PC-9 (cell line): ENCODE measurements at regions of chr15 and their contacts with region 1.

Region 1: DNA sequence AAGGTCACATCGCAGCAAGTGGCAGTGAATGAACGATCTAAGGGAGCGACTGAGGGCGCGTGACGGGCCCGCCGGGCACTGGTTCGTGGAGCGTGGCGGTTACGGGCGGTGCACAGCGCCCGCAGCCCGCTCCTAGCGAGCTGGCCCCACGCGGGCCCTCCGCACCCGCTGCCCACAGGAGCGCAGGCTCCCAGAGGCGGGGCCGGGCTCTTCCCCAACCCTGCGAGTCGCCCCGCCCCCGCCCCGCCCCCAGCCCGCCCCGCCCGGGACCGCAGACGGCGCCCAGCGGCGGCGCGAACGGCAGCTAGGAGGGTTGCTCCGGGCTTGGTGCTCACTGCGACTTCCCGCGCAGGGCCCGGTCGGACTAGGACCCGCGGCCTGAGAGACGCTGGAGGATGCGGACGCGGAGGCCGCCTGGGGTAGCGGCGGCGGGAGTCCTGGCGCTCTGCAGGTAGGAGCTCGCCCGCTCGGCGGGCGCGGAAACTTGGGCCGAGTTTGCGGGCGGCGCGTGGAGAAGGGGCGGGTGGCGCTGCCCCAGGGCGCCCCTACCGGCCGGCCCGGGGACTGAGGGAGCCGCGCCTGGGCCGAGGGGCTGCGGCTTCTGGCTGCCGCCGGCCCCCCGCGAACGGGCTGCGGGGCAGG is at the start of gene C15orf39:
- DNase-seq: peak; percentile 52 to 74
- H3K4me3 ChIP-seq: peak within 1 kb of the TSS; percentile 93
- H3K27ac ChIP-seq: peak within 1 kb of the TSS; percentile 97
- H3K4me1 ChIP-seq: peaks cover 43% of the 10 kb centered on the region
- H3K27me3 ChIP-seq: no peaks in the 10 kb centered on the region
- CTCF ChIP-seq: peak; percentile 73; the same call in 1 of the 2 replicates
- total RNA-seq, gene C15orf39: 40.8 and 41.3 TPM in 2 replicates

Region 2: DNA sequence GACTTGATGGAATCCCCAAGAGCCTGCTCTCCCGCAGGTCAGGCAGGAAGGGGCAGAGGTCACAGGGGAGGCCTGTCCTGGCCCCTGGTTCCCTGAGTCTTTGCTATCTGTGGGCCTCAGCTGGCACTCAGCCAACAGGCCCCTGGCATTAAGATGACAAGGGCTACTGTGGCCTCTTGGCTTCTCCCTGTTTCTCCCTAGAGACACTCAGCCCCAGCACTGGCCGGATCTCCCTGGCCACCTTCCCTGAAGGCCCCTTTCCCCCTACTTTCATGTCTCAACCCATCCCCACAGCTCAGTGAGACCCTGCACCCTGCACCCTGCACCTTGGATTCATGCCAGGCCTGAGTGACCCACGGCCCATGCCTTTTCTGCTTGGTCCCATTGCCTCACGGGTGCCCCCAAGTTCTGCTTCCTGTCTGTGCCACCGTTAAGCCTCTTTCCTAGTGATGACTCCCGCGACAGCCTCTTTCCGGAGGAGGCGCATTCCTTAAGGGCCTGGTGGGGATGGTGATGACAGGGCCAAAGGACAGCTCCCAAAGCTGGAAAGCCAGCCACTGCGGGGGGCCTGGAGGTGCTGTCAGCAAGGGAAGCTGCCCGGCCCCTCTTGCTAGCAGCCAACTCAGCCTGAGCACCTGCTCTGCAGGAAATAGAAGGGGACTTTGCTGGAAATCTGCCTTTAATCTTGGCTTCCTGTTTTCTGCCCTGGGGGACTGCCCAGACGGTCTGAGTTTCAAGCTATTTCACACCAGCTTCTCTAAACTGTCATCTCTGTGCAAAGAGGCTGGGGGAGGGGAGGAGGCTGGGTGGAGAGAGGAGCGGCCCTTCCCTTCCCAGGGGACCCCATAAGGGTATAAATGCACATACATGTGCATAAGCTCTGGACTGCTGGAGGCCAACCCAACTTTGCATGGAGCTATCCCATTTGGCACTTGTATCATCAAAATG is 424.6 kb before region 1 on chr15:
- CTCF ChIA-PET with region 1: no interaction called
- POLR2A ChIA-PET with region 1: no interaction called
- intact Hi-C with region 1: no loop called
- DNase-seq: no peak
- H3K4me3 ChIP-seq: no peak overlapping the region
- H3K27ac ChIP-seq: no peak overlapping the region
- H3K4me1 ChIP-seq: peaks cover 17% of the 10 kb centered on the region
- H3K27me3 ChIP-seq: no peaks in the 10 kb centered on the region
- CTCF ChIP-seq: no peak

Region 3: GRCh38 chr15:74799856-74800547 is 401.7 kb before region 1 on chr15:
- CTCF ChIA-PET with region 1: no interaction called
- POLR2A ChIA-PET with region 1: no interaction called
- intact Hi-C with region 1: no loop called
- DNase-seq: peak; percentile 63 to 89
- H3K4me3 ChIP-seq: no peak overlapping the region
- H3K27ac ChIP-seq: no peak overlapping the region
- H3K4me1 ChIP-seq: 0 out of 2 replicates have a peak, but pooled peaks cover 8% of the 10 kb centered on the region
- H3K27me3 ChIP-seq: no peaks in the 10 kb centered on the region
- CTCF ChIP-seq: peak; percentile 96

Region 4: GRCh38 chr15:74937596-74938296 is 264.0 kb before region 1 on chr15 and contains the start of gene COX5A:
- CTCF ChIA-PET with region 1: no interaction called
- POLR2A ChIA-PET with region 1: no interaction called
- intact Hi-C with region 1: loop called (anchors 5 kb)
- DNase-seq: peak; percentile 90 to 95
- H3K4me3 ChIP-seq: peak within 1 kb of the TSS; percentile 90
- H3K27ac ChIP-seq: peak within 1 kb of the TSS; percentile 88
- H3K4me1 ChIP-seq: peaks cover 14% of the 10 kb centered on the region
- H3K27me3 ChIP-seq: no peaks in the 10 kb centered on the region
- CTCF ChIP-seq: no peak
- total RNA-seq, gene COX5A: 177 and 247 TPM in 2 replicates

Region 5: DNA sequence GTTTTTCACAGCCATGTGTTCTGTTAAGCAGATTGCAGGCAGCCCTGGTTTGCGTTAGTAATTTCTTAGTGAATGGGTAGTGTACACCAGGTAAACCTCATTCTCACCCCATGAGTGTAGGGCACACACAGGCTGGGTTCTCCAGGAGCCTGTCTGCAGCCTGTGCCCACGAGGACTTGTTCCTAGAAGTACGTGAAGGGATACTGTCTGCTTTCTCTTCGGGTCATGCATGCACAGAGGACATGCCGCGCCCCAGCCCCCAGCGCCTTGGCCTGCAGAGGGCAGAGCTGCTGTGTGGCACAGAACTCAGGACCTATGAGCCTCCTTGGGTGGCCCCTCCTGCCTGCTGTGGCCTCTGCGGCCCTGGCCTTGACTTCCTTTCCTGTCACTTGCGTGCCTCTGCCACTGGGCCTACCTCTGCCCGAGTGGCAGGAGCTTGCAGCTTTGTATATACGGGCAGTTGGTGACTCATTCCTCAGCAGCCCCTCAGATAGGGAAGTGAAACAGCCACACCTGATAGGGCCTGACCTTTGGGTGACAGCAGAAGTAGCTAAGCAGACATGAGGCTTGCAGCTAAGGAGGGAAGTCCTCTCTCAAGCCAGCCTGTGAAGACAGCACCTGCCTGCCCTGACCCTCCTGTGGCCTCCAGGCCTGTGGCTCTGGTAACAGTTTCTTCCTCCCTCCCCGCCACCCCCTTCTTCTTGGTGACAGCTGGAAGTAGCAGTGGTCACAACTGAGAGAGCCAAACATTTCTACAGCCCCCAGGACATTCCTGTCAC is 158.8 kb before region 1 on chr15:
- CTCF ChIA-PET with region 1: interaction called, 23 read pairs
- POLR2A ChIA-PET with region 1: interaction called, 20 read pairs
- intact Hi-C with region 1: loop called (anchors 1 kb)
- DNase-seq: peak; percentile 93 to 99
- H3K4me3 ChIP-seq: no peak overlapping the region; the same call in 1 of the 2 replicates
- H3K27ac ChIP-seq: peak overlapping the region; percentile 99
- H3K4me1 ChIP-seq: peaks cover 82% of the 10 kb centered on the region
- H3K27me3 ChIP-seq: no peaks in the 10 kb centered on the region
- CTCF ChIP-seq: peak; percentile 73

Region 6: DNA sequence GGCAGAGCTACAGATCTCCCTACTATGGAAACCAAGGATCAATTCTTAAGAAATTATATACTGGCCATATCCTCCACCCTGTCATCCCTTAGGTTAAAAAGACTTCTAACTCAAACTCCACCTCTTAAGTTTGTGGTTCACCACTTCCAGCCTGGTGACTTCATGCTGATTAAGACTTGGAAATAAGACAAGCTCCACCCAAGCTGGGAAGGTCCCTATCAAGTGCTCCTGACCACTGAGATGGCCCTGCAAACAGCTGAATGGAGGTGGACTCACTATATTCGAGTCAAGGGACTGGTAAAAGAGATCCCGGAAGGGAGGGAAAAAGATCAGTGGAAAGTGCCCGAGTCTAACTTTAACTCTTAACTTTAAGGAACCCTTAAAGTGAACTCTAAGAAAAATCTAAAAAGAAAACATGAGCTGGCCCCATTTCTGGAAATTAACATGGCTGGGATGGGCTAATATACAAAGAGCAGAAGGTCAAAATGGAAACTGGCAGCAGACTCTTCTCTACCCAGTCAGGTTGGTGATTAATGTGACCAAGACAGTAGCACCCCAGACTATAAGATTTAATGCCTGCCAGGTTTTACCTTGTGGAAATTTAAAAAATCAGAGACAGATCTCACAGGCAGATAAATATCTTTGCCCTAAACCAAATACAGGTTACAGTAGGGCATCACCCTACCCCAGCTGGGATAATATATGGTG is 134.5 kb before region 1 on chr15:
- CTCF ChIA-PET with region 1: interaction called, 4 read pairs
- POLR2A ChIA-PET with region 1: interaction called, 15 read pairs
- intact Hi-C with region 1: no loop called
- DNase-seq: peak; percentile 44 to 77
- H3K4me3 ChIP-seq: no peak overlapping the region
- H3K27ac ChIP-seq: peak overlapping the region; percentile 86
- H3K4me1 ChIP-seq: peaks cover 38% of the 10 kb centered on the region
- H3K27me3 ChIP-seq: no peaks in the 10 kb centered on the region
- CTCF ChIP-seq: no peak

Region 7: DNA sequence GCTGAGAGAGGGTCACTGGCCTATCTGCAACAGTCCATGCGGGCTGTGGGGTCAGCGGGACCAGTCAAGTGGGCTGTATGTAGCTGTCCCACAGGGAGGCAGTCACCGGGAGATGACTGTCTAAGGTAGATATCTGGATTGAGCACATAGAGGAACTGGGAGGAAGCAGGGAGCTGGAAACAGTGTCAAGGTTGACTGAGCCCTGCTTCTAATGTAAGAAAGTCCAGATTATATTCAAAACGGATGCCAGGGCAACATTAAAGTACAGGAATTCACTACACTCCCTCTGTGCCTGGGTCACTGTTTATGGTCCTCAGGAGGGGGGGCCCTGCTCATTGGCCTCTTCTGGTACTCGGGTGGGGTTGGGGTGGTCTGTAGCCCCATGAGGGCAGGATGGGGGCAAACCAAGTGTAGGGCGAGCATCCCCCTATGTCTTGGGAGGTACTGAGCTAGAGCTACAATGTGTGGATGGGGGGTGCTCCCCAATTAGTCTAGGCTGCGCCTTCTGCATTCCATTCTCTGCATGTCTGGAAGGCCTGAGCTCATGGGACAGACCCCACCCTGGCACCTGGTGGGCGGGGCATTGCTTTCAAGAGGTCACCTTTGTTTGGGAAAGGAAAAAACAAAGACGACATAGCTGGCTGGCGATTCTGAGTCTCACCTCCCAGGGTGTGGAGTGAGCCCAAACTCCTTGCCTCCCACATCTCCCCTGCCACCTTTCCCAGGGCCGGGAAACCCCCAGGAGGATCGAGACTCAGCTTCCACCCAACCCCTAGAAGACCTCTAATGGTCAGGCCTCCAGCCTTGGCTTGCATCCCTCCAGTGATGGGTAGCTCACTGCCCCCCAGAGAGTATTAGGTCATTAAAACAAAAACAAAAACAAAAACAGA is 45.2 kb before region 1 on chr15:
- CTCF ChIA-PET with region 1: interaction called, 3 read pairs
- POLR2A ChIA-PET with region 1: interaction called, 11 read pairs
- intact Hi-C with region 1: no loop called
- DNase-seq: peak; percentile 45 to 64
- H3K4me3 ChIP-seq: no peak overlapping the region
- H3K27ac ChIP-seq: no peak overlapping the region
- H3K4me1 ChIP-seq: 0 out of 2 replicates have a peak, but pooled peaks cover 8% of the 10 kb centered on the region
- H3K27me3 ChIP-seq: no peaks in the 10 kb centered on the region
- CTCF ChIP-seq: no peak

Region 8: DNA sequence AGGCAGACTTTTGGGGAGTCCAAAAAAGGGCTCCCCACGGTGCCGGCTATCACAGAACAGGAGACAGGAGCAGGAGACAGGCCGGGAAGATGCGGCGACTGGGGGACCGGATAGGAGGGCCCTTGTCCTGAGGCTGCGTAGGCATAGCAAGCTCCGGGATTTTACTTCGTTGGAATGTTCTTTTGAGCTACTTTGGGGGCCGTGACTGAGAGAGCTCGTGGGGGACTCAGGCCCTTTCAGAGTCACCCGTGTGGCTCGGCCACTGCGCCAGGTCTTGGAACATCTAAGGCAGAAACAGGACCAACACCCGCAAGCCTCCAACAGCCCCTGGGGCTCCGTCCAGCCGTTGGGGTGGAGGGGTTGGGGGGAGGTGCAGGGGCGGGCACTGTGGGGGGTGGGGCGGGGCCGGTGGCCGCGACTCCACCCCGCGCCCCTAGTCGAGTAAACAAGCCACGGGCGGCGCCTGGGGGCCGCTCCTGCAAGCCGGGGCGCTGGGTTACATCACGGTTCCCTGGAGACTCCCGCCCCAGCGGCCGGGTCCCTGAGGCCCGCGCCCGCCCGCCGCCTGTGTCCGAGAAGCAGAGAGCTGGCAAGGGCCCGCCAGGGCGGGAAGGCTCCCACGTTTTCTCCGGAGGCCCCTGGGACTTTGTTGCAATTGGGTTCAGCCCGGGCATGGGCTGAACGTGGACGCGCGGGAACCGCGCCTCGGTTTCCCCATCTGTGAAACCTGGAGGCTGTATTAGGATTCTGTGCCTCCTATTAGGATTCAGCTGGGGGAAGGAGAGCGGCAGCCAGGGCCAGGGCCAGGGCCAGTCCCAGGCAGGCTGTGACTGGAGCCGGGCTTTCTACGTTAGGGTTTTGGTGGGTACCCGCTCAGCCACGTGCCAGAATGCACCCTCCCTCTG is 23.3 kb before region 1 on chr15:
- CTCF ChIA-PET with region 1: interaction called, 11 read pairs
- POLR2A ChIA-PET with region 1: interaction called, 6 read pairs
- intact Hi-C with region 1: no loop called
- DNase-seq: no peak
- H3K4me3 ChIP-seq: no peak overlapping the region
- H3K27ac ChIP-seq: no peak overlapping the region
- H3K4me1 ChIP-seq: peaks cover 37% of the 10 kb centered on the region
- H3K27me3 ChIP-seq: no peaks in the 10 kb centered on the region
- CTCF ChIP-seq: no peak